ENCODE measurements at regions of chr9 and their contacts with region 1.

Region 1: GRCh38 chr9:84315278-84315877 is 25.2 kb downstream of the SLC28A3 start:
- DNase-seq: no peak

Region 2: DNA sequence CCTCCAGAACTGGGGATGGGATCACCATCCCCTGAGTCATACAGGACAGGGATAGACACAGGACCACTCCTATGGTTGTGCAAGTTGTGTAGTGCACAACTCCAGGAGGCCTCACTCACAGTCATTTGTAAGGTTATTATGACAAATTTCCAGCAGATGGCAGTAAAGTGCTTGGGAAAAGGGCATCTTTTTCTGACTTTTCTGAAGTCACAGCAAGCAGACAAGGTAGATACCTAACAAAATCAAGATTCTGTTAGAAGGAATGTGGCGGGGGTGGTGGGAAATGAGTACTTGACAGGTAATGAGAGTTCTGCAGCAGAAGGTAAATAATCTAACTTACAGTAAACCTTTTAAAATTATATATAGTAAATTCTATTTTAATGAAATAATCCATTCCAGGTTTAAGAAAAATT is 377.5 kb before region 1 on chr9:
- intact Hi-C with region 1: loop called (anchors 2 kb)
- DNase-seq: peak; percentile 29

Region 3: GRCh38 chr9:84123648-84124406 is 191.6 kb before region 1 on chr9:
- intact Hi-C with region 1: no loop called
- DNase-seq: no peak

Region 4: DNA sequence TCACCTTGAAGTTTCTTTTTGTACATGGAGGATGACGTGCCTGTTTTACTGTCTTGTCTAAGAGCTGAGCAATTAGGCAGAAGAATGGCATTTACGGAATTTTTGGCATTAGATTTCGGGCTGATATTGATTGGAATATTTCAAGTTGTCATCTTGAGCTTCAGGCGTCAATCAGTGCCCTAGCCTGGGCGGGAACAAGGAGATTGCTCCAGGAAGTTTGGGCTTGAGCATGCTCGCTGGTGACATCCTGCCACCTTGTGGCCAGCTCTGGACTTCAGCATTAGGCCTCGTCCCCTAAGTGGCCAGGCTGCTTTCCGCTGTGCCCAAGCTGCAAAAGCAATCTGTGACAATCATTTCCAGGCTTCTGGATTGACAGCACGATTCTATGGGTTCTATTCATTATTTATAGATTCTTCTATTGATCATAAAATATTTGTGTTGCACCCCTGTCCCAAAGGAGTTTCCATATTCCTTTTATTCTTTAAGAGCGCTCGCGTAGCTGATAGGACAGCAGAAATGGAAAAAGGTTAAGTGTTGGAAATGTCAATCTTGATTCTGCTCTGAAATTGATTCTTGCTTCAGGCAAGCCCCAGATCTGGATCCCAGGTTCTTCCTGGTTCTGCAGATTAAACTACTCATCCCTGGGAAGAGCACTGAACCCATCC is 54.2 kb before region 1 on chr9:
- intact Hi-C with region 1: loop called (anchors 5 kb)
- DNase-seq: peak; percentile 86